ENCODE measurements at regions of chr2 and their contacts with region 1.

Region 1: DNA sequence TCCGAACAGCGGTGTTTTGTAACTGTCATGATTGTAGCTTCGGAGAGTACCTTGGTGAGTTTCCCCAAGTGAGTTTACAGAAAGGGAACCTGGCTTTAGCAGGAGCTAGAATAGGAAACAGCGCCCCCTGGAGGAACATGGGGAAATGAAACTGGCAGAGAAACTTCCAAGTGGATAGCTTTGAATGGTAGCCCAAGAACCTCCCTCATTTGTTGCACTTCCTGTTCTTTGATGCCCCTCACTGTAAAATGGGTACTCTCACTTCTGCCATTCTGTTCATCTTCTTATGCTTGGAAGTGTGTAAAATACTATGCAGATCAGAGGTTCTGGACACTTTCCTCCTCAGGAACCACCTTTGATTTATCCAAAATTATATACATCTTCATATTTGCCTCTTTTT is 36.2 kb downstream of the CHST10 start:
- DNase-seq: peak; percentile 14
- H3K4me3 ChIP-seq: no peak overlapping the region
- CTCF ChIP-seq: peak; percentile 85

Region 2: GRCh38 chr2:100272841-100273329 is 108.4 kb before region 1 on chr2:
- CTCF ChIA-PET with region 1: interaction called, 504 read pairs
- POLR2A ChIA-PET with region 1: no interaction called
- DNase-seq: no peak
- H3K4me3 ChIP-seq: no peak overlapping the region
- CTCF ChIP-seq: no peak

Region 3: GRCh38 chr2:100291120-100291970 is 89.9 kb before region 1 on chr2:
- CTCF ChIA-PET with region 1: interaction called, 11 read pairs
- POLR2A ChIA-PET with region 1: no interaction called
- DNase-seq: peak; percentile 92
- H3K4me3 ChIP-seq: no peak overlapping the region
- CTCF ChIP-seq: no peak

Region 4: DNA sequence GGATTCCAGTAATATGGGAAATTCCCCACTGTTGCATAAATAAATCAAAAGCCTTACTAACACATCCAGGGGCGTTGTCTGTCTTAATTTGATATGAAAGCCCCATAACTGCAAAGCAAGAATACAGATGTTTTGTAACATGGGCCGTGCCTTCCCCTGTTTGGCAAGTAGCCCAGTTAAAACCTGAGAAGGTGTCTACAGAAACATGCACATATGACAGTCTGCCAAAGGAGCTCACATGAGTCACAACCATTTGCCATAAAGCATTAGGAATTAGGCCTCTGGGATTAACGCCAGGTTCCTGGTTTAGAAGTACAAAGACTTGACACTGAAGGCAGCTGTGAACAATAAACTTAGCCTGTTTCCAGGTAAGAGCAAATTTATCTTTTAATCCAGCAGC is 15.8 kb before region 1 on chr2:
- CTCF ChIA-PET with region 1: interaction called, 33 read pairs
- POLR2A ChIA-PET with region 1: interaction called, 3 read pairs
- DNase-seq: peak; percentile 37
- H3K4me3 ChIP-seq: no peak overlapping the region
- CTCF ChIP-seq: no peak

Region 5: GRCh38 chr2:100394111-100394641 is 12.9 kb after region 1 on chr2:
- CTCF ChIA-PET with region 1: interaction called, 54 read pairs
- POLR2A ChIA-PET with region 1: no interaction called
- DNase-seq: no peak
- H3K4me3 ChIP-seq: no peak overlapping the region
- CTCF ChIP-seq: no peak

Region 6: DNA sequence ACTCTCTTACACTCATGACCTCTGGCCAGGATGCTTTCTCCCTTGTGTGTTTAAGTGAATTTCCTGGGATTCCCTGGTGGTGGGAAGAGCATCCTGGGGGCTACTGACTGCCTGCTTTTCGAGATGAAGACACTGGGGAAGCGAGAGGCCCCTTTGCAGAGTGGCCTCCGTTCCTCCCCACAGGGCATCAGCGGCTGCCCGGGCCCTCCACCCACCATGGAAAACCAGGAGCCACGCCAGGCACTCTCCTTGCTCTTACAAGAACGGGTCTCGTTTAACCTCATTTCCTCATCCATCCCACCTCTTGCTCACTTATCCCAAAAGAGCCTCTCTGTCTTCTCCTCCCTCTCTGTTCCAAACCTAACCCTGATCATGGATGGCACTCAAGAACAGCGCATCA is 18.5 kb after region 1 on chr2:
- CTCF ChIA-PET with region 1: interaction called, 21 read pairs
- POLR2A ChIA-PET with region 1: no interaction called
- DNase-seq: no peak
- H3K4me3 ChIP-seq: no peak overlapping the region
- CTCF ChIP-seq: no peak